PC-9 (cell line): ENCODE measurements at regions of chr17 and their contacts with region 1.

Region 1: DNA sequence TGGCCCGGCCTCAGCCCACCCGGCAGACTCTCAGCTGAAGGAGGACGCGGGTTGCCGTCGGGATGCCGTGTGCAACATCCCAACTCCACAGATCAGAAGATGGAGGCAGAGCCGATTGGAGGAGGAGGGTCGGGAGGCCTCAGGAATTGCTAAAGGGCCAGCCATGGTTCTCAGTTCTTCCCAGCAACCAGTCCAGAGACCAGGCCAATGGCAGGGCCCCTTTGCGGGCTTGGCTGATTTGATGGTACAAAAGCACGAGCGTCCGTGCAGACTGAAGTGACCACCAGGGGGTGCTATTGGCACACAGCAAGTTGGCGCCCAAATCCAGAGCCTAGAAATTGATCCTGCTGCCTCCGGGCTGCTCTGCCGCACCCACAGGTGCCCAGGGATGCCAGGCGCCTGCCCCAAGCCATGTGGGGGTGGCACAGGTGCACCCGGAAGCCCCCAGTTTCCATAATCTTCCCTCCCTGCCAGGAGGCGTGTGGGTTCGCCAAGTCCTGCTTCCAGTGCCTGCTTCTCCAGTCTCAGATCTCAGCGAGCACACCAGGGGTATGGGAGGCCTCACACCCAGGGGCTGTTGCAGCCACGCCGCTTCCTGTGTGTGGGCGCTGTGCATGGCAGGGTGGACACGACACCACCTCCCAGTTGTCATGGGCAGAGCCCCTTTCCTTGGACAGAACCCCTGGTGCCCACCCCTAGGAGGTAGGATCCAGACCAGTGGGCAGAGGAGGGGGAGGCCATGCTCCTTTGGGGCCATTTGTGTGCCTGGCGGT is 7.1 kb upstream of the TEX19 start:
- DNase-seq: peak; percentile 63 to 78
- H3K4me3 ChIP-seq: no peak overlapping the region
- H3K27ac ChIP-seq: no peak overlapping the region
- H3K4me1 ChIP-seq: no peaks in the 10 kb centered on the region
- H3K27me3 ChIP-seq: no peaks in the 10 kb centered on the region
- CTCF ChIP-seq: peak; percentile 81

Region 2: GRCh38 chr17:82332669-82333278 is 19.1 kb before region 1 on chr17:
- CTCF ChIA-PET with region 1: no interaction called
- POLR2A ChIA-PET with region 1: no interaction called
- intact Hi-C with region 1: no loop called
- DNase-seq: peak; percentile 44 to 47
- H3K4me3 ChIP-seq: peak overlapping the region; percentile 58
- H3K27ac ChIP-seq: no peak overlapping the region
- H3K4me1 ChIP-seq: peaks cover 4% of the 10 kb centered on the region; the same call in 1 of the 2 replicates
- H3K27me3 ChIP-seq: no peaks in the 10 kb centered on the region
- CTCF ChIP-seq: no peak

Region 3: DNA sequence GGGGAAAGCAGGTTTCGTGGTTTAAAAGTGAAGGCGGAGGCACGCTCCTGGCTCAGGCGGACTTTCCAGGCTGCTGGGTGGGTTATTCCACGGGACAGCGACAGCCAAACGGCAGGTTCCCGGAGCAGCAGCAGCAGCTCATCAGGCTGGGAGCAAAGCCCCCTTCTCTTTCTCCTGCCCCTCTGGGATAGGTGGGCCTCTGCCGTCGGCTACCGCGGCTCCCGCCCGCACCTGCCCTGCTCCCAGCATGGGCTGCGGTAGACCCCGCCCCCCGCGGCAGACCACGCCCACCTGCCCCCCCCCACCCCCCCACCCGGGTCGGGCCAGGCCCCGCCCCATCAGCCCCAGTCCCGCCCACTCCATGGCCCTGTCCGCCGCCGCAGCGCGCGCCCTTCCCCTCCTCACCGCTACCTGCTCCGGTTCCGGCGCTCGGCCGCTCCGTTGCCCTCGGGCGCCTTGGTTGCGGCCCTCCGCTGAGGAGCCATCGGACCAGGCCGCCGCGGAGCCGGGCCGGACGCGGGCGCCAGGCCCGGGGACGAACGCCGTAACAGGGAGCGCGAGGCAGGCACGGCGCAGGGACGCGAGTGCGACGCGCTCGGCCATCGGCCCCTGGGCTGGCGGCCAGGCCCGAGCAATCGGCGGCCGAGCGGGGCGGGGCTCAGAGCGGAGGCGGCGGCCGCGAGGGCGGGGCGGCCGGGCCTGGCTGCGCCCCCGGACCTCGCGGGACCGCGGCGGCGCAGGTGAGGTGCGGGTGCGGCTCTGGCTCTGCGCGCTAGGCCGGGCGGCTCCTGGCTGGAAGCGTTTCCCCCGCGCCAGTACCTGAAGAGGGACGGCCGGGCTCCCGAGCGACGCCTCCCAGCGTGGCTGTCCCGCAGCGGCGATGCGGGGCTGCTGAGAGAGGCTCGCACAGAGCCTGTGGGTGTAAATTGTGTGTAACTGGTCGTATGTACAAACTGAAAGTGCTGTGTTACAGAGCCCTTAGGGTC is 66.4 kb after region 1 on chr17 and contains the starts of genes HEXD and OGFOD3:
- CTCF ChIA-PET with region 1: no interaction called
- POLR2A ChIA-PET with region 1: no interaction called
- intact Hi-C with region 1: loop called (anchors 5 kb)
- DNase-seq: peak; percentile 56 to 91
- H3K4me3 ChIP-seq: peak within 1 kb of the TSS; percentile 81
- H3K27ac ChIP-seq: no peak within 1 kb of the TSS
- H3K4me1 ChIP-seq: peaks cover 9% of the 10 kb centered on the region
- H3K27me3 ChIP-seq: no peaks in the 10 kb centered on the region
- CTCF ChIP-seq: no peak
- total RNA-seq, gene HEXD: 30.0 and 35.9 TPM in 2 replicates
- total RNA-seq, gene OGFOD3: 26.6 and 32.9 TPM in 2 replicates

Region 4: GRCh38 chr17:82528484-82529265 is 176.8 kb after region 1 on chr17:
- CTCF ChIA-PET with region 1: no interaction called
- POLR2A ChIA-PET with region 1: no interaction called
- intact Hi-C with region 1: loop called (anchors 10 kb)
- DNase-seq: peak; percentile 36 to 80
- H3K4me3 ChIP-seq: no peak overlapping the region
- H3K27ac ChIP-seq: no peak overlapping the region
- H3K4me1 ChIP-seq: no peaks in the 10 kb centered on the region; the same call in 1 of the 2 replicates
- H3K27me3 ChIP-seq: no peaks in the 10 kb centered on the region
- CTCF ChIP-seq: no peak

Region 5: DNA sequence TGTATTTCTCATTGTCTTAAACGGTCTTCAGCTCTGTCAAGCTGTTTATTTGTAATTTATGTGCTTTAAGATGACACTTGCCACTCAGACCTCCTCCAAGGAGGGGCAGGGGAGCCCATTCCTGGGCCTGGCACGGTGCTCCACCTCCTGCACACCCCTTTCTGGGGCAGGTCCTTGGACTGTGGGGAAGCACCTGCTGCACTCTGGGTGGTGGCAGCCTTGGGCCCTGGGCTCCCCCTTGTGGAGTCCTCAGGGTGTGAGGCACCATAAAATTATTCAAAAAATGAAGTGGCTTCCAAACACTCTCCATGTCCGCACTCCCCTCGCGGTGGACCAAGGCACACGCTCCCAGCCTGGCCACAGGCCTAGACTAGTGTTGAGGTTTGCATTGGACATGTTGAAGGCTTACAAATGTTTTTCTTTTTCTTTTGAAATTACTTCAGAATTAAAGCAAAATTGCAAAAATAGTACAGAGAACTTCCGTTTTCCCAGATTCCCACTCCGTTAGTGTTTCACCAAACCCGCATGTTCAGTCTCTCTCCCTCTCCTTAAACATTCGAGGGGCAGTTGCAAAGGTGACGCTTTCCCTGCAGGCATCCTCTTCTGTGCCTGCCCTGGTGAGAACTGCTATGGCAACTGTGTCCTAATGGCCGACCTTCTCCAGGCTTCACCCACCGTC is 200.0 kb after region 1 on chr17:
- CTCF ChIA-PET with region 1: no interaction called
- POLR2A ChIA-PET with region 1: no interaction called
- intact Hi-C with region 1: loop called (anchors 2 kb)
- DNase-seq: peak; percentile 46 to 76
- H3K4me3 ChIP-seq: no peak overlapping the region
- H3K27ac ChIP-seq: no peak overlapping the region
- H3K4me1 ChIP-seq: no peaks in the 10 kb centered on the region
- H3K27me3 ChIP-seq: no peaks in the 10 kb centered on the region
- CTCF ChIP-seq: peak; percentile 71

Region 6: DNA sequence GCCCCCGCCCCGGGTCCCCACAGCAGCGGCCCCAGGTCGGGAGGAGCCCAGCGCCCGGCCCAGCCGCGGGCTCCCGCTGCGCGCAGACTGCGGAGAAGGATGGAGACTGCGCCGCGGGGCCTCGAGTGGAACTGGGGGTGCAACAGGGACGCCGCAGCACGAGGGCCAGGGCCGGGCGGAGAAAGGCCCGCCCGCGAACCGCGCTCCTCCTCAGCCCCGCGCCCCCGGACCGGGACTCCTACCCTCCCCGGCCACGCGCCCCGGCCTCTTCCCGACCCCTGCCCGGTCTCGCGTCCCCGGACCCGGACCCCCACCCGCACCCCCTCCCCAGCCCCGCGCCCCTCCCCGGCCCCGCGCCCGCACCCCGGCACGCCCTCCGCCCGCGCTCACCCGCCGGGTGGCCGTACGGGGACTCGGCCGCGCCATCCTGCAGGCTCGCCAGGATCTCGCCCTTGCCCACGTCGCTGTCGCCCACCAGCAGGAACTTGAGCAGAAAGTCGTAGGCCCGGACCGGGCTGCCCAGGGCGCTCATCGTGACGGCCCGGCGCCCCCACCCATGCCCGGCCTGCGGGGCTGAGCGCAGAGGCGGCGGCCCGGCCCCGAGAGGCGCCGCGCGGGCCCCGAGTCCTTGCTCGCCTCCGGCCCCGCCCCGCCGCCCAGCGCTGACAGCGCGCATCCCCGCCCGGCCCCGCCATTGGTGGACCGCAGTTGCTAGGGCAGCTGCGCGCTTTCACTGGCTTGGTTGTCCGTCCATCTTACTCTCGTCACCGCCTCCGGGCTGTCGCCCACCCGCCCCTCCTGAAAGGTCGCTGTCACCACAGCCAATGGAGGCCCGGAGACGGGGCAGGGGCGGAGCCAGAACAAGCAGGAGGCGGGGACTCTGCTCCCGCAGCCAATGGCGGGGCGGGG is 346.4 kb after region 1 on chr17 and contains the start of gene RAB40B:
- CTCF ChIA-PET with region 1: no interaction called
- POLR2A ChIA-PET with region 1: no interaction called
- intact Hi-C with region 1: no loop called
- DNase-seq: peak; percentile 84 to 99
- H3K4me3 ChIP-seq: peak within 1 kb of the TSS; percentile 55; the same call in 1 of the 2 replicates
- H3K27ac ChIP-seq: no peak within 1 kb of the TSS
- H3K4me1 ChIP-seq: no peaks in the 10 kb centered on the region
- H3K27me3 ChIP-seq: no peaks in the 10 kb centered on the region
- CTCF ChIP-seq: no peak
- total RNA-seq, gene RAB40B: 7.9 and 11.0 TPM in 2 replicates

Region 7: DNA sequence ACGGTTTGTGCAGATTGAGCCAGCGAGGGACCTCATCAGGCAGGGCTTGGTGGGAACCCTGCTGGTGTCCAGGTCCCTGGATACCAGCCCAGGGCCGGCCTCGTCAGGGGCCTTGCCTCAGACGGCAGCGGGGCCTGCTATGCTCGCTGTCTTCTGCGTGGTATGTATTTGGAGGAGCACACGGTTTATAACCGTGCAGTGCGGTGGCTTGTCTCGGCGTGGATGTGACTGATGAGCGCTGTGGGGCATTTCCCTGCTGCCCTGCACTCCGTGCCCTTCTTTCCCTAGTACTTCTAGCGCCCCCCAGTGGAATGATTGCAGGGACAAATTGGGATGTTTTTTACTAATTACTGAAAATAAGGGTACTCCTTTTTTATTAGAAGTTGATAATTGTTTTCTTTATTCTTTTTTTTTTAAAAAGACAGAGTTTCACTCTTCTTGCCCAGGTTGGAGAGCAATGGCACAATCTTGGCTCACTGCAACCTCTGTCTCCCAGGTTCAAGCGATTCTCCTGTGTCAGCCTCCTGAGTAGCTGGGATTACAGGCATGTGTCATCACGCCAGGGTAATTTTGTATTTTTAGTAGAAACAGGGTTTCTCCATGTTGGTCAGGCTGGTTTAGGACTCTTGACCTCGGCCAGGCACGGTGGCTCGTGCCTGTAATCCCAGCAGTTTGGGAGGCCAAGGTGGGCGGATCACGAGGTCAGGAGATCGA is 415.3 kb after region 1 on chr17:
- CTCF ChIA-PET with region 1: no interaction called
- POLR2A ChIA-PET with region 1: no interaction called
- intact Hi-C with region 1: loop called (anchors 5 kb)
- DNase-seq: peak in 1 of 2 experiments; percentile 44
- H3K4me3 ChIP-seq: no peak overlapping the region
- H3K27ac ChIP-seq: no peak overlapping the region
- H3K4me1 ChIP-seq: no peaks in the 10 kb centered on the region
- H3K27me3 ChIP-seq: no peaks in the 10 kb centered on the region
- CTCF ChIP-seq: peak; percentile 72

Region 8: DNA sequence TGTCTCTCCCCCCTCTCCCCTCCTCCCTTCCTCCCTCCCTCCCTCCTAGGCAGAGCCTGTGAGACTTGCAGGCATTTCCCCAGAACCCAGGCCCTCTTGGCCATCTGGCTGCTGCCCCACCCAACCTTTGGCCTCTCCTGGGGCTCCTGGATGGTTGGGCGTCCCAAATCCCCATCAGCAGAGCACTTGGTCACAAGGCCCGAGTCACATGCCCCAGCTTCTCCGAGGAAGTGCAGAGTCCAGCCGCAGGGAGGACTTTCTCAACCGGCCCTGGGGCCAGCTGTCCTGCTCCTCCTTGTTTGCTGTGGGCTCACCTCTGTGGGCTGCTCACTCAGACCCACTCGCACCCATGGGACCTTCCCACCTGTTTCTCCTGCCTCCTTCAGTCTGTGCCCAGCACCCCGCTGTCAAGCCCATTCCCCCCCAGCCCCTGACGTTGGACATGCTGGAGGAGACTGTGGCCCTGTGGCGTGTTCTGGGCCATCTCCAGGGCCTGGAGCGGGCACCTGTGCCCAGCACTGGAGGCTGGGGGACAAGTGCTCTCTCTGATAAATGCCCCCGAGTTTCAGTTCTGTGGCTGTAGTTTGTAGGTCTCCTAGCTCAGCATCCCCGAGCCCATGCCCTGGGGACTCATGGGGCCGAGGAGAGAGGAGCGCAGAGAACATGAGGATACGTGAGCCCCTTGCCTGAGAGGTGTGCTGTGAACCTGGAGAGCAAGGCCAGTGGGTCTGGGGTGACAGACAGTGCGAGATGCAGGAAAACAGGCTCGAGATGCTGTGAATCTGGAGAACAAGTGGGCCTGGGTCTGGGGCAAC is 530.2 kb after region 1 on chr17:
- CTCF ChIA-PET with region 1: no interaction called
- POLR2A ChIA-PET with region 1: no interaction called
- intact Hi-C with region 1: loop called (anchors 10 kb)
- DNase-seq: no peak
- H3K4me3 ChIP-seq: no peak overlapping the region
- H3K27ac ChIP-seq: no peak overlapping the region
- H3K4me1 ChIP-seq: peaks cover 28% of the 10 kb centered on the region
- H3K27me3 ChIP-seq: no peaks in the 10 kb centered on the region
- CTCF ChIP-seq: no peak